CD4-positive, alpha-beta memory T cell (primary cell): ENCODE measurements at regions of chr6 and their contacts with region 1.

Region 1: GRCh38 chr6:89371849-89372505 is 19.5 kb upstream of the UBE2J1 start:
- DNase-seq: peak; percentile 64 to 70 (median 69)
- H3K4me3 ChIP-seq: no peak overlapping the region
- H3K4me3 Mint-ChIP-seq: no peak overlapping the region
- H3K27ac ChIP-seq: no peak overlapping the region
- H3K27ac Mint-ChIP-seq: peak overlapping the region in 5 of 7 donors; percentile 24 to 73 (median 56)
- H3K4me1 ChIP-seq: peaks cover 28% of the 10 kb centered on the region
- H3K4me1 Mint-ChIP-seq: peaks cover 16 to 25% (median 23%) of the 10 kb centered on the region in 4 donors
- H3K27me3 ChIP-seq: no peaks in the 10 kb centered on the region
- H3K27me3 Mint-ChIP-seq: no peaks in the 10 kb centered on the region

Region 2: DNA sequence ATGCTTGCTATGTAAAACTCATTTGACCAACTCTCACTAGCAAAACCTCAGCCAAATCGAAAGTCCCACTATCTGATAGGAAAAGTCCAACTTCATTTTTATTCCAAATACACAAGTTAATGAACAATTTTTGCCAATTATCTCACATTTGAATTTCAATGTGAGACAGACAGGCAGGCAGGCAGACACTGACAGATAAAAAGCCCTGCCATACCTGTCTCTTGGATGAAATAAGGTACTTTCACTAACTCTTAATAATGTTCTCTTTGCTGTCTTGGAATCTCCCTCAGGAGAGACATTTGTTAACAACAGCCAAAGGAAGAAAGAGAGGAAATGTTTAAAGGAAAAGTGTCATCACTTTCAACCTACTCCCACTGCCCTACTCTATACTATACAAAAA is 490.5 kb before region 1 on chr6:
- CTCF ChIA-PET with region 1: no interaction called
- POLR2A ChIA-PET with region 1: no interaction called
- intact Hi-C with region 1: no loop called
- DNase-seq: no peak
- H3K4me3 ChIP-seq: no peak overlapping the region
- H3K4me3 Mint-ChIP-seq: no peak overlapping the region
- H3K27ac ChIP-seq: no peak overlapping the region
- H3K27ac Mint-ChIP-seq: no peak overlapping the region
- H3K4me1 ChIP-seq: no peaks in the 10 kb centered on the region
- H3K4me1 Mint-ChIP-seq: peaks cover 0 to 5% (median 4%) of the 10 kb centered on the region in 4 donors
- H3K27me3 ChIP-seq: no peaks in the 10 kb centered on the region
- H3K27me3 Mint-ChIP-seq: no peaks in the 10 kb centered on the region

Region 3: DNA sequence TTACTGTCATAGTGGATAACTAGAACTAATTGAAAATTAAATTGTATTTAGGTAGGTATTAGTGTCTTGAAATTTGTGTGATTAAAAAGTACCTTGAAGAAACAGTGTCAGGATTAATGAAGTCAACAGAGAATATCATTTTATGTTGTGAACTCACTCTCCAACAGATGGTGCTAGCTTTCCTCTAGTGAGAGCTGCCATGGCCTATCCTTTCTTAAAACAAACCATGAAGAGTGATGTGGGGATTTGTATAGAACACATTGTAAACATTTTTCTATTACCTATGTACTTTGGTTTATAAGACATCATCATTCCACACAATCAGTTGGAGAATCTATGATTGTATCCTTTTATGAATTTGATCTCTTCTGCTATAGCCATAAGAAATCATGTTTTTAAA is 249.4 kb before region 1 on chr6:
- CTCF ChIA-PET with region 1: interaction called, 3 read pairs
- POLR2A ChIA-PET with region 1: no interaction called
- intact Hi-C with region 1: loop called (anchors 5 kb)
- DNase-seq: peak in 3 of 5 donors; percentile 15 to 26 (median 19)
- H3K4me3 ChIP-seq: no peak overlapping the region
- H3K4me3 Mint-ChIP-seq: no peak overlapping the region
- H3K27ac ChIP-seq: no peak overlapping the region
- H3K27ac Mint-ChIP-seq: no peak overlapping the region
- H3K4me1 ChIP-seq: no peaks in the 10 kb centered on the region
- H3K4me1 Mint-ChIP-seq: peaks cover 1 to 8% (median 5%) of the 10 kb centered on the region in 4 donors
- H3K27me3 ChIP-seq: no peaks in the 10 kb centered on the region
- H3K27me3 Mint-ChIP-seq: no peaks in the 10 kb centered on the region

Region 4: DNA sequence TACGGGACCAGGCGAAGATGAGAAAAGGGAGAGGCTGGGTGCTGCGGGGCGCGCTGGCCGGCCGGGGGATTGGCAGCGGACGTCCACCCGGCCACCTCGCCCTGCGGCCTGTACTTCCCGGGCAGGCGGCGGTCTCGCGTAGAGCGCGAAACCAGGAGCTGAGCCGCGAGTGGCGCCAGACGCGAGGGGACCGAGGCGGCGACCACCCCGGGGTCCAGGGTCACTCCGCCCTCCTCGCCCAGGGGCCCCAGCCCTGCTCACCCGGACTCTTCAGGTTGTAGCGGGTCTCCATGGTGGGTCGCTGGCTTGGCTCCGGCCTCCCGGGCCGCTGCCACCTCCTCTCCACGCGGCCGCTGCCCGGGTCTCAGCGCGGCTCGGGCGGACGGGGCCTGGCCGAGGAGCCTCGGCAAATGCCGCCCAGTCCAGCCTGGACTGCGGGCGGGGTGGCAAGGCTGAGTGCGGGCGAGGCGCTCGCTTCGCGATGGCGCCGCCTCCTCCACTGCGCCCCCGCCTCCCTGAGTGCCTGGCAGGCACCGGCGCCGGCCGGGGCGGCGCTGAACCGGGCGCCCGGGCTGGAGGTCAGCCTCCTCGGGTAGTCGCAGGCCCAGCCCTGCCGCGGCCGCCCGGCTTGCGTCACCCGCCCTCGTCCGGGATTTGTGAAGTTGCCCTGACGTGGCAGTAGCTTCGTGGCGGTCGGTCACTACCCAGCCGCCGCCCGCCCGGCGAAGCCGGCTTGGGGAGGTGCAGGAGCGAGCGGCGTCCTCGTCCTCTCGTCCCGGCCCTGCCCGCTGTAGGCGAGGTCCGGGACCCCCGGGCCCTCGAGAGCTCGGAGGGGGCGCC is 19.5 kb before region 1 on chr6 and contains the start of gene UBE2J1:
- CTCF ChIA-PET with region 1: interaction called, 79 read pairs
- POLR2A ChIA-PET with region 1: interaction called, 22 read pairs
- intact Hi-C with region 1: loop called (anchors 2 kb)
- DNase-seq: peak; percentile 67 to 75 (median 71)
- H3K4me3 ChIP-seq: peak within 1 kb of the TSS; percentile 1 to 90
- H3K4me3 Mint-ChIP-seq: peak within 1 kb of the TSS; percentile 92 to 99 (median 98)
- H3K27ac ChIP-seq: peak within 1 kb of the TSS; percentile 89
- H3K27ac Mint-ChIP-seq: peak within 1 kb of the TSS; percentile 86 to 99 (median 98)
- H3K4me1 ChIP-seq: peaks cover 69% of the 10 kb centered on the region
- H3K4me1 Mint-ChIP-seq: peaks cover 44 to 82% (median 61%) of the 10 kb centered on the region in 4 donors
- H3K27me3 ChIP-seq: no peaks in the 10 kb centered on the region
- H3K27me3 Mint-ChIP-seq: no peaks in the 10 kb centered on the region
- total RNA-seq, gene UBE2J1: 21.9 to 22.6 TPM

Region 5: GRCh38 chr6:89412071-89413005 is 40.4 kb after region 1 on chr6 and contains the start of gene RRAGD:
- CTCF ChIA-PET with region 1: interaction called, 22 read pairs
- POLR2A ChIA-PET with region 1: interaction called, 3 read pairs
- intact Hi-C with region 1: loop called (anchors 2 kb)
- DNase-seq: peak; percentile 57 to 75 (median 65)
- H3K4me3 ChIP-seq: peak within 1 kb of the TSS; percentile 38 to 49
- H3K4me3 Mint-ChIP-seq: peak within 1 kb of the TSS; percentile 90 to 98 (median 94)
- H3K27ac ChIP-seq: peak within 1 kb of the TSS; percentile 25
- H3K27ac Mint-ChIP-seq: peak within 1 kb of the TSS; percentile 72 to 91 (median 82)
- H3K4me1 ChIP-seq: peaks cover 19% of the 10 kb centered on the region
- H3K4me1 Mint-ChIP-seq: peaks cover 10 to 25% (median 16%) of the 10 kb centered on the region in 4 donors
- H3K27me3 ChIP-seq: peaks cover 4% of the 10 kb centered on the region
- H3K27me3 Mint-ChIP-seq: peaks cover 4 to 14% of the 10 kb centered on the region in 2 donors
- total RNA-seq, gene RRAGD: 5.9 to 6.8 TPM

Region 6: DNA sequence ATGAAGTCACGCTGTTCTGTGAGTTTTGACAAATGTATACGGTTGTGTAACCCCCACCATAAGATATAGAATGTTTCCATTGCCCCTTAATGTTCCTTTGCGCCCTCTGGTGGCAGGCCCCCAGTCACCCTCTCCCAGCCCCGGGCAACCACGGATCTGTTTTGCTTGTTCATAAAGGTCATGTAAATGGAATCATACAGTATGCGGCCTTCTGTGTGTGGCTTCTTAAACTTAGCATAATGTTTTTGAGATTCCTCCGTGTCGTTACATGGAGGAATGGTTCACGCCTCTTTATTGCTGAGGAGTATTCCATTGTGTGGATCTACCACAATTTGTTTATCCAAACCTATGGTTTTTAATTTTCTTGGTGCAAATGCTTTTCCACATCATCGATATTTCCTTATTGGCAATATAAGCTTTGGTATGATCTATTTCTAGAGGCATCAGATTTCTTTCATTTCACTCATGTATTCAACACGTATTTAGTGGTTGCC is 238.2 kb after region 1 on chr6:
- CTCF ChIA-PET with region 1: interaction called, 31 read pairs
- POLR2A ChIA-PET with region 1: no interaction called
- intact Hi-C with region 1: loop called (anchors 1 kb)
- DNase-seq: peak; percentile 62 to 69 (median 65)
- H3K4me3 ChIP-seq: no peak overlapping the region
- H3K4me3 Mint-ChIP-seq: no peak overlapping the region
- H3K27ac ChIP-seq: no peak overlapping the region
- H3K27ac Mint-ChIP-seq: peak overlapping the region in 2 of 7 donors; percentile 14 to 25
- H3K4me1 ChIP-seq: no peaks in the 10 kb centered on the region
- H3K4me1 Mint-ChIP-seq: peaks cover 0 to 3% (median 0%) of the 10 kb centered on the region in 4 donors
- H3K27me3 ChIP-seq: no peaks in the 10 kb centered on the region
- H3K27me3 Mint-ChIP-seq: no peaks in the 10 kb centered on the region